ENCODE measurements at regions of chr5 and their contacts with region 1.

Region 1: DNA sequence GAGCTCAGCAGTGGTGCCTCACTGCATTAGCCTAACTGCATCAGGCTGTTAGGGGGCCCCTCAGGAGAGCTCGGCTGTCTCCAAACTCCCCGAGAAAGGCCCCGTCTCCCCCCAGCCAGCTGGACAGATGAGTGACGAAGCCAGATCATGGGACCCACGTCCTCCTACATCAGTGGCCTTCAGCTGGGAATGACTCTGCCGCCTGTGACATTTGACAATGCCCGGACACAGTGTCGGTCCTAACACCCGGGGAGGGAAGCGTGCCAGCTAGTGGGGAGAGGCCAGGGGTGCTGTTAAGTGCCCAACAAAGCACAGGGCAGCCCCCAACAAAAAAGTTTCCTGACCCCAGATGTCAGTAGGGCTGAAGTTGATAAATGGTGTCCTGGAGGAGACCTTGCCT is 375.2 kb upstream of the IRX2 start:
- DNase-seq: no peak
- ATAC-seq: no peak
- H3K4me3 ChIP-seq: no peak overlapping the region
- H3K27ac ChIP-seq: no peak overlapping the region
- H3K4me1 ChIP-seq: no peaks in the 10 kb centered on the region
- H3K27me3 ChIP-seq: no peaks in the 10 kb centered on the region; the same call in 1 of the 2 replicates
- CTCF ChIP-seq: no peak

Region 2: GRCh38 chr5:2619216-2619615 is 507.4 kb before region 1 on chr5:
- CTCF ChIA-PET with region 1: no interaction called
- POLR2A ChIA-PET with region 1: no interaction called
- in situ Hi-C with region 1: no loop called
- intact Hi-C with region 1: no loop called
- DNase-seq: no peak
- ATAC-seq: no peak
- H3K4me3 ChIP-seq: no peak overlapping the region
- H3K27ac ChIP-seq: no peak overlapping the region
- H3K4me1 ChIP-seq: no peaks in the 10 kb centered on the region
- H3K27me3 ChIP-seq: no peaks in the 10 kb centered on the region; the same call in 1 of the 2 replicates
- CTCF ChIP-seq: no peak

Region 3: DNA sequence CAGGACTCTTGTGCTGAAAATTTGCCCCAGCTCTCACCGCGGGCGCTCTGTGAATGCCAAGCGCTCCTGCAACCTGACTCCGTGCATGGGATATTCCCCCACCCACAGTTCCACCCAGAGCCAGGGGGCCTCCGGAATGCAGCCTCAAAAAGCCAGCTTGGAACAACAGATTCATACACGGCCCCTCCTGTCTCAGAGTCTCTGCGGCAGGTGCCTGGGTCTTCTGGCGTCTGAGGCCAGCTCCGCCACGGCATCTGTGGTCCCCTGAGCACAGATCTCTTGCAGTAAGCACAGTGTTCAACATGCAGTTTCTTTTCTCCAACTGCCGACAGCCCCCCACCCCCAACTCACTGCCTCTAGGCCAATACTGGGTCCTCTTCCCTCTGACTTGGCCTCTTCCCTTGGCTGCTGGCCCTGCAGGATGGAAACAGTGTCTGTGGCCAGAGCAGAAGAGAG is 19.5 kb before region 1 on chr5:
- CTCF ChIA-PET with region 1: no interaction called
- POLR2A ChIA-PET with region 1: no interaction called
- in situ Hi-C with region 1: no loop called
- intact Hi-C with region 1: no loop called
- DNase-seq: no peak
- ATAC-seq: no peak
- H3K4me3 ChIP-seq: no peak overlapping the region
- H3K27ac ChIP-seq: no peak overlapping the region
- H3K4me1 ChIP-seq: no peaks in the 10 kb centered on the region
- H3K27me3 ChIP-seq: no peaks in the 10 kb centered on the region
- CTCF ChIP-seq: no peak

Region 4: DNA sequence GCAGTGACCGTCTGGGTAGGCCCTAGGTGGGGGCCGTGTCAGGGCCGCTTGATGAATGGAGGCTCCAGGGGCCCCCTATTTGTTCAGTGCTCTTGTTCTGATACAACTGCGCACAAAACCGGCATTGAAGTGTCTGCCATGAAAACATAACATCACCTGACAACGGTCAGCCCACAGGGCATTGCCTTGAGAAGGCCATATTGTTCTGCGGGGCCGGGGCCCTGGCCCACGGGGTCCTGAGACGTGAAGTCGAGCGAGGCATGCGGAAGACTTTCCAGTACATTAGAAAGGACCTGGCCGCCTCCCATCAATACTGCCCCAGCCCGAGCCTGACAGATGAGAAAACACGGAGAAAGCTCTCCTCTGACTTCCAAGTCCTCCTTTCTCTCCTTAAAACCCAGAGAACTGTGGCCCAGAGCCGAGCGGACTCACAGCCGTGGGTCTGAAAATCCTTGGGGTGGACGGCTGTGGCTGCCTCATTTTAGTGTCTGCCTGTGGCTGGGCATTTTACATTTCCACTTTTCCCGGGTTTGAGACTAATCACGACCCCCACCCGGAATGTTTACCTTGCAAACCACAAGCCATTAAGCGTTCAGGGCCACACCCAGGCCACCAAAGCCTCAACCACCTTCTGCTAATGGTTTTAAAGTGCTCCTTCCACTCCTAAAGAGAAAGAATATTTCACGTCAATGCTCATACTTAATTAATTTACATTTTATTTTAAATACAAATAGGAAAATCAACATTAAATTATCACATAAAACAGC is 15.8 kb after region 1 on chr5:
- CTCF ChIA-PET with region 1: no interaction called
- POLR2A ChIA-PET with region 1: no interaction called
- in situ Hi-C with region 1: no loop called
- intact Hi-C with region 1: no loop called
- DNase-seq: no peak
- ATAC-seq: no peak
- H3K4me3 ChIP-seq: no peak overlapping the region
- H3K27ac ChIP-seq: no peak overlapping the region
- H3K4me1 ChIP-seq: no peaks in the 10 kb centered on the region
- H3K27me3 ChIP-seq: no peaks in the 10 kb centered on the region
- CTCF ChIP-seq: no peak

Region 5: DNA sequence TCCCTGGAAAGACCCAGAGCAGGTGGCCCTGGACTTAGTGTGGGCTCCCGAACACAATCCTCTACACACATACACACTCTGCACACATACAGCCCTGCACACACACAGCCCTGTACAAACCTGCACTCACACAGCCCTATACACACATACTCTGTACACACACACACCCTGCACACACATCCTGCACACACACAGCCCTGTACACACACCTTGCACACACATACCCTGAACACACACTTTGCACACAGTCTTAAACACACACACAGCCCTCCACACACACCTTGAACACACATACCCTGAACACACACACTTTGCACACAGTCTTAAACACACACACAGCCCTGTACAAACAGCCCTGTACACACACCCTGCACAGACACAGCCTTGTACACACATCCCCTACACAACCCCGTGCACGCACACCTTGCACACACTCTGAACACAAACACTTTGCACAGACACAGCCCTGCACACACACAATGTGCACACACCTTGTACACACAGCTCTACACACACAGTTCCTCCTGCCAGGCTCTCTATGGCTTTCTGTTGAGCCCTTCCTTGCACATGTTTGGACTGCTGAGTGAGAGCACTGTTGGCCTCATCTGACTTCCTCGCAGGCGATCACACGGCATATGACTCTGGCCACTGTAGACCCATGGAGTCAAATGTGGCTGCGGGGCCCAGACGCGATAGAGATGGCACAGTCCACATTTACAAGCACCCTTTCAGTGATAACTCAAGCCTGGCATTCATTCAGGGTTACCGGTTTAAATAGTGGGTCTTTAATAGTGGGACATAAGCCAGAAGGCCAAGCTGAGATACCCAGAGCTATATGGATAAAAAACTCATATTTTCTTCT is 223.3 kb after region 1 on chr5:
- CTCF ChIA-PET with region 1: interaction called, 15 read pairs
- POLR2A ChIA-PET with region 1: no interaction called
- in situ Hi-C with region 1: no loop called
- intact Hi-C with region 1: no loop called
- DNase-seq: no peak
- ATAC-seq: no peak
- H3K4me3 ChIP-seq: no peak overlapping the region
- H3K27ac ChIP-seq: no peak overlapping the region
- H3K4me1 ChIP-seq: no peaks in the 10 kb centered on the region
- H3K27me3 ChIP-seq: no peaks in the 10 kb centered on the region; the same call in 1 of the 2 replicates
- CTCF ChIP-seq: no peak

Region 6: GRCh38 chr5:4630031-4630430 is 1503.4 kb after region 1 on chr5:
- CTCF ChIA-PET with region 1: no interaction called
- POLR2A ChIA-PET with region 1: no interaction called
- in situ Hi-C with region 1: no loop called
- intact Hi-C with region 1: no loop called
- DNase-seq: no peak
- ATAC-seq: no peak
- H3K4me3 ChIP-seq: no peak overlapping the region
- H3K27ac ChIP-seq: no peak overlapping the region
- H3K4me1 ChIP-seq: no peaks in the 10 kb centered on the region
- H3K27me3 ChIP-seq: 0 out of 2 replicates have a peak, but pooled peaks cover 2% of the 10 kb centered on the region
- CTCF ChIP-seq: no peak